Activated T-helper 1 cell treated with anti-CD3 and anti-CD28 coated beads, Interleukin-12 subunit alpha, Interleukin-12 subunit beta, Interleukin-2, Interleukin-4 antibody, amounts not matched to agents 30 ng/mL and 10 ng/mL and 1 ng/mL, durations not matched to agents 14 hours and 24 hours and 36 hours (primary cell): ENCODE measurements at regions of chr3 and their contacts with region 1.

Region 1: DNA sequence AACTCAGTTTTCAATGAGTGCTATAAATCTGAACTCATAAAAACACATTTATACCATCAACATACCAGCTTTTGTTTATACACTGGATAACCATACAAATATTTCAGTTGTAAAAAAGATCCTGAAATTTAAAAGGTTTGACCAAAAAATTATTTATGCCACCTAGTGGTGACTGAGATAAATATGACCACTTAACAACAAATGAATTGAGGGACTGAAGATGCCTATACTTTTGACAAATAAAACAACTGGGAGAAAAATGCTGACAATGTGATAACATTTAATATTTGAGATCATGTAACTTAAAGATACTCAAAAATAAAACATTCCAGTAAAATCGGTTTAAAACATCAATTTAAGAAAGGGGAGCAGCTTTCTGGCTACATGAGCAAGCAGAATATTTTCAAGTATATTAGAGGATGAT is 30.4 kb downstream of the ATG3 start:
- DNase-seq: no peak
- H3K4me3 Mint-ChIP-seq: no peak overlapping the region
- H3K27ac Mint-ChIP-seq: no peak overlapping the region
- H3K4me1 Mint-ChIP-seq: peaks cover 5% of the 10 kb centered on the region
- H3K27me3 Mint-ChIP-seq: no peaks in the 10 kb centered on the region

Region 2: DNA sequence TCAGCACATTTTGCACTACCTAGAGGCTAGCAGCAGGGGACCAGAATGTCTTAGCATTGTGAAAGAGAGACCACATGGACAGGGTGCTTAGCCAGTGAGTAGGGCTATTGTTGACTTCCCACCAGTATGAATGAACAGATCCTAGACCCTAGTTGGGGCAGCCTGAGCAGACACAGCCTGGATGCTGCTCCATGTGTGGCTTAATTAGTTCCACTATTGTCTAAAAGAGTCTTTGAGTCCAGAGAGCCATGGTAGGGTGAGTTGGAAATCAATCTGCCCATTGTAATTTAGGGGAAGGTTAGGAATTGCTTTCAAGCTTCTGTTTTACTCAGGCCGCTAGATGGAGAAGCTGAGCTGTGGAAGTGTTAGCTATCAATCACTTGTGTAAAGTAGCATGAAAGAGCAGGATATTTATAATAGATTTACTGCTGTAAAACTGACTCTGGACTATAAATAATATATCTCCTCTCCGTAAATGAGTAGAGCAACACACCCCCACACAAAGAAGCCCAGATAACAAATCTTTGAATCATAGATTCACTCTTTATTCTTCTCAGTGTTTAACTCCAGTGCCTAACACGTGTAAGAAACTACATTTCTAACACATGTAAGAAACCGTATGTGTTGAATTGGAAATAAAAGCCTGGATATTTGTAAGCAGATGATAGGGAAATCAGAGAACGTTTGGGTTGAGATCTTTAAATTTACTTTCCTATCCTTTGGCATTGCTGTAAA is 394.2 kb before region 1 on chr3:
- intact Hi-C with region 1: loop called (anchors 5 kb)
- DNase-seq: no peak
- H3K4me3 Mint-ChIP-seq: no peak overlapping the region
- H3K27ac Mint-ChIP-seq: peak overlapping the region; percentile 6
- H3K4me1 Mint-ChIP-seq: peaks cover 54% of the 10 kb centered on the region
- H3K27me3 Mint-ChIP-seq: no peaks in the 10 kb centered on the region

Region 3: GRCh38 chr3:112327371-112327951 is 203.9 kb before region 1 on chr3:
- intact Hi-C with region 1: loop called (anchors 1 kb)
- DNase-seq: peak; percentile 38
- H3K4me3 Mint-ChIP-seq: no peak overlapping the region
- H3K27ac Mint-ChIP-seq: no peak overlapping the region
- H3K4me1 Mint-ChIP-seq: no peaks in the 10 kb centered on the region
- H3K27me3 Mint-ChIP-seq: peaks cover 1% of the 10 kb centered on the region